ENCODE measurements at regions of chr16 and their contacts with region 1.

Region 1: GRCh38 chr16:807347-808084 is 7.0 kb upstream of the GNG13 start:
- DNase-seq: peak; percentile 99
- H3K4me3 ChIP-seq: peak overlapping the region; percentile 96
- H3K27ac ChIP-seq: peak overlapping the region; percentile 85
- H3K4me1 ChIP-seq: 0 out of 2 replicates have a peak, but pooled peaks cover 3% of the 10 kb centered on the region
- H3K27me3 ChIP-seq: no peaks in the 10 kb centered on the region

Region 2: GRCh38 chr16:1054660-1055556 is 247.4 kb after region 1 on chr16:
- in situ Hi-C with region 1: loop called (anchors 25 kb)
- DNase-seq: peak; percentile 80
- H3K4me3 ChIP-seq: no peak overlapping the region
- H3K27ac ChIP-seq: no peak overlapping the region
- H3K4me1 ChIP-seq: no peaks in the 10 kb centered on the region
- H3K27me3 ChIP-seq: no peaks in the 10 kb centered on the region

Measured in GM23248 (cell line).